Gastrocnemius medialis (tissue), 4 donors: ENCODE measurements at regions of chr11 and their contacts with region 1.

Region 1: DNA sequence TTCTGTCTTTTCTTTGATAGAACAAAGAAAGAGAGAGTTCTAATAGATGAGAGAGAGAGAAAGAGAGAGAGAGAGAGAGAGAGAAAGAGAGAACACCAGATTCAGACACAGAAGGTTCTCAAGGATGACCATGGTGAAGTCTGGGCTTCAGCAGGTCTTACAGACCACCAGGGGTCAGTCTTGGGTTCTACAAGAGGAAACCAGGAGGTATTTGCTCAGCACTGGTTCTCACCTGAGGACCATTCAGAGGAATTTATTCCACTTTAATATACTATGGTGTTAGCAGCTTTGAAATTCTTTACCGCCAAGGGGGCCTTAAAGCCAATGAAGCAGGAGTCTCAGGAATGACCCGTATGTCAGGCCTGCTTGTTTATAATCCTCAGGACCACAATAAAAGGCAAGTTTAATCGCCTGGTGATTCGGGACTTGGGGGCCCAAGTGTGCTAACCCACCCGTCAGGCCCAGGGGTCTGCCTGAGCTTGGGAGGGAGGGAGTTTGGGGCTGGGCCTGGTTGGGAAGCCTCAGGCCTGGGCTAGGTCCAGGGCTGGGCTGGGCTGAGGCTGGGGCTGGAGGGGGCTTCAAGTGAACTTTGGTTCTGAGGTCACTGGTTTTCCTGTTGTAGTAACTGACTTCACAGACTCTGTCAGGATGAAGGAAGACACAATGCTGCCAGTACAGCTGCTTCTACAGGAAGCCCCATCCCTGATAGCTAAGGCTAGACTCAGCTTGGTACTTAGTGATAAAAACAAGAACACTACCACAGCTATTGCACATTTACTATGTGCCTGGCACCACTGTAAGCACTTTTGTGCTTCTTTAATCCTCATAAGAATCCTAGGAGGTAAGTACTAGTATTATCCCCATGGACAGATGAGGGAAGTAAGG is 179.2 kb upstream of the ZBED5 start:
- DNase-seq: peak; percentile 27 to 39
- ATAC-seq: peak; percentile 65 to 78
- H3K4me3 ChIP-seq: no peak overlapping the region
- H3K27ac ChIP-seq: peak overlapping the region; percentile 42 to 88 (median 76)
- H3K4me1 ChIP-seq: peaks cover 22 to 26% of the 10 kb centered on the region in 2 donors
- H3K27me3 ChIP-seq: no peaks in the 10 kb centered on the region
- CTCF ChIP-seq: peak; percentile 70 to 79 (median 76)
- POLR2A ChIP-seq: no peak

Region 2: DNA sequence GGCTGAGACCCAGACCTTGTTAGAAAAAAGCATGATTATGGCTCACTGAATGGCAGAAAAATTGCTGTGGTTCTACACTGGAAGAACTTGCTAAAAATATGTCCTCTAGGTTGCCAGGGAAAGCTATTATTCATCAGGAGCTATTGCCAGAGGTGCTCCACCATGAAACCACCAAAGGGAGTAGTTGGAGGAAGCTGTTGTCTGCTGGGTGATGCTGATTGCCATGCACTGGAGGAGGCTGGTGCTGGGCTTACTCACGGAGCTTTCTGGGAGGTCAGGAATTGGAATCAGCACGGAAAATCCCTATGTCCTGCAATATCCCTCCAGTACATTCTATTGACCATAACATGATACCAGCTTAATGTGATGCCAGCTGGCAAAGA is 20.4 kb after region 1 on chr11:
- in situ Hi-C with region 1: no loop called
- intact Hi-C with region 1: loop called (anchors 2 kb)
- DNase-seq: no peak
- ATAC-seq: peak; percentile 61 to 63
- H3K4me3 ChIP-seq: no peak overlapping the region
- H3K27ac ChIP-seq: peak overlapping the region in 2 of 4 donors; percentile 68 to 74
- H3K4me1 ChIP-seq: peaks cover 11 to 18% of the 10 kb centered on the region in 2 donors
- H3K27me3 ChIP-seq: no peaks in the 10 kb centered on the region
- CTCF ChIP-seq: no peak
- POLR2A ChIP-seq: no peak

Region 3: DNA sequence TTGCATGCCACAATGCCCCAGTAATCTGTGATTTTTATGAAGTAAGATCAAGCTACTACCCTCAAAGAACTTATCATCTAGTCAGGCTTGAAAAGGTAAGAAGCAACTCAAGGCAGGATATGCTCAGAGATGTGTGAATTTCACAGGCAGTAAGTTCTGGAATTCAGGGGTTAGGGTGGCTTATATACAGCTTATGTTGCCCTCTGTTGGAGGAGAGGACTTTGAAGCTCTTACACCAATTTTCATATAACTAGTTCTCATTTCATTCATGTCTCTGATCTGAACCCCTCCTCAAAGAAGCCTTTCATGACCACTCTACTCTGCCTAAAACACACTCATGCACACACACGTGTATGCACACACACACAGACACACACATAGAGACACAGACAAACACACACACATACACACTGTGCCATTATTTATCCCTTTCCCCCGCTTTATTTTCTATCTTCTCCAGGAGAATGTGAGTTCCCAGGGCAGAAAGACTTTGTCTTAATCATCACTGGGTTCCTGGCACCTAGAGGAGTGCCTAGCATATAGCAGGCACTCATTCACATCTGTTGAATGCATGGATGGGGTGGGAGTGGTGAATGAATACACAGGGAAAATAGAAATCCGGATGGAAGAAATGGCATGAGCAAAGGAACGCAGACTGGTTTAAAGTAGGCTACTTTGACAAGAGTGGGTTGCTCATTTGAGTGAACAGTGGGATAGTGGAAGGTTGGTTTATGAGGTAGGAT is 41.4 kb after region 1 on chr11:
- in situ Hi-C with region 1: no loop called
- intact Hi-C with region 1: loop called (anchors 2 kb)
- DNase-seq: no peak
- ATAC-seq: peak; percentile 43 to 52
- H3K4me3 ChIP-seq: no peak overlapping the region
- H3K27ac ChIP-seq: peak overlapping the region in 1 of 4 donors; percentile 30
- H3K4me1 ChIP-seq: peaks cover 30 to 38% of the 10 kb centered on the region in 2 donors
- H3K27me3 ChIP-seq: no peaks in the 10 kb centered on the region
- CTCF ChIP-seq: peak in 2 of 5 experiments; percentile 9 to 14
- POLR2A ChIP-seq: no peak

Region 4: GRCh38 chr11:11157185-11157584 is 120.1 kb after region 1 on chr11:
- in situ Hi-C with region 1: loop called in 1 of 4 experiments (anchors 10 kb)
- intact Hi-C with region 1: loop called (anchors 1 kb)
- DNase-seq: no peak
- ATAC-seq: peak in 1 of 2 donors; percentile 77
- H3K4me3 ChIP-seq: no peak overlapping the region
- H3K27ac ChIP-seq: no peak overlapping the region
- H3K4me1 ChIP-seq: no peaks in the 10 kb centered on the region
- H3K27me3 ChIP-seq: no peaks in the 10 kb centered on the region
- CTCF ChIP-seq: peak in 4 of 5 experiments; percentile 22 to 51 (median 30)
- POLR2A ChIP-seq: no peak

Region 5: DNA sequence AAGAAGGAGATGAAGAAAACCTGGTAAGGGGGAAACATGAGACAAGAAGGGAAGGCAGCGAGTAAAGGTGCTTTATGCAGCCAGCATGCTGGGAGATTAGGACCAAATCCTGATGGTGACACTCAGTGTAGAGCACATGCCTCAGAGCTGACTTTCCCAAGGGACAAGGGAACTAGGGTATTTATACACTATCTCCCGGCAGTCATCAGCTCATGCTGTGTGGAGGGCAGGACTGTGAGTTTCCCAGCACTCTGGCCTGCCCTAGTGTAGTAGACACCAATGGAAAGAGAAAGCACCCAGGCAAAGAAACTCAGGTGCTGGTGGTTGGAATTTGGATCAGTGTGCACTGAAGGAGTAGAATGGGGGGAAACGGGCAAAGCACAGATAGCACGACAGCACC is 444.3 kb after region 1 on chr11:
- in situ Hi-C with region 1: no loop called
- intact Hi-C with region 1: no loop called
- DNase-seq: no peak
- ATAC-seq: no peak
- H3K4me3 ChIP-seq: no peak overlapping the region
- H3K27ac ChIP-seq: no peak overlapping the region
- H3K4me1 ChIP-seq: peaks cover 8 to 20% of the 10 kb centered on the region in 2 donors
- H3K27me3 ChIP-seq: no peaks in the 10 kb centered on the region
- CTCF ChIP-seq: no peak
- POLR2A ChIP-seq: no peak